MCF 10A (cell line): ENCODE measurements at regions of chr1 and their contacts with region 1.

Region 1: GRCh38 chr1:53182111-53182593 is 14.5 kb upstream of the CPT2 start:
- DNase-seq: peak; percentile 84
- H3K4me3 Mint-ChIP-seq: no peak overlapping the region
- H3K27ac Mint-ChIP-seq: no peak overlapping the region
- H3K4me1 Mint-ChIP-seq: no peaks in the 10 kb centered on the region
- H3K27me3 Mint-ChIP-seq: no peaks in the 10 kb centered on the region
- CTCF ChIP-seq: peak; percentile 66

Region 2: DNA sequence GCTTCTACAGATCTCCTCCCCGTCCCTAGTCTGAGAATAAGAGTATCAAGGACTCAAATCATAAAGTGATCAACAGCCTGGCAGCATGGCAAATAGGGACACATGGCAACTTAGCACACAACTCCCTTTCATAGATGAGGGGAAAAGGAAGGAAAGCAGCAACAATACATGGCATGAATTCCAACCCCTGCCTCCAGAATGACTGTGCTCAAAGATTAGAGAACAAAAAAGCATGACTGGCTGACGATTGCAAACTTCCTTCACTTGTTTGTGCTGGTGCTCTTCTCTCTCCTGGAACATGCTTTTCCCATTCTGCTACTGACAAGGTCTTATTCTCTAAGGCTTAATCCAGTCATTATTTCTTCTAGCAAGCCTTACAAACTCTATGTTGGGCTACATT is 1160.0 kb before region 1 on chr1:
- CTCF ChIA-PET with region 1: no interaction called
- POLR2A ChIA-PET with region 1: no interaction called
- intact Hi-C with region 1: no loop called
- DNase-seq: no peak
- H3K4me3 Mint-ChIP-seq: no peak overlapping the region
- H3K27ac Mint-ChIP-seq: no peak overlapping the region
- H3K4me1 Mint-ChIP-seq: no peaks in the 10 kb centered on the region
- H3K27me3 Mint-ChIP-seq: no peaks in the 10 kb centered on the region
- CTCF ChIP-seq: no peak

Region 3: DNA sequence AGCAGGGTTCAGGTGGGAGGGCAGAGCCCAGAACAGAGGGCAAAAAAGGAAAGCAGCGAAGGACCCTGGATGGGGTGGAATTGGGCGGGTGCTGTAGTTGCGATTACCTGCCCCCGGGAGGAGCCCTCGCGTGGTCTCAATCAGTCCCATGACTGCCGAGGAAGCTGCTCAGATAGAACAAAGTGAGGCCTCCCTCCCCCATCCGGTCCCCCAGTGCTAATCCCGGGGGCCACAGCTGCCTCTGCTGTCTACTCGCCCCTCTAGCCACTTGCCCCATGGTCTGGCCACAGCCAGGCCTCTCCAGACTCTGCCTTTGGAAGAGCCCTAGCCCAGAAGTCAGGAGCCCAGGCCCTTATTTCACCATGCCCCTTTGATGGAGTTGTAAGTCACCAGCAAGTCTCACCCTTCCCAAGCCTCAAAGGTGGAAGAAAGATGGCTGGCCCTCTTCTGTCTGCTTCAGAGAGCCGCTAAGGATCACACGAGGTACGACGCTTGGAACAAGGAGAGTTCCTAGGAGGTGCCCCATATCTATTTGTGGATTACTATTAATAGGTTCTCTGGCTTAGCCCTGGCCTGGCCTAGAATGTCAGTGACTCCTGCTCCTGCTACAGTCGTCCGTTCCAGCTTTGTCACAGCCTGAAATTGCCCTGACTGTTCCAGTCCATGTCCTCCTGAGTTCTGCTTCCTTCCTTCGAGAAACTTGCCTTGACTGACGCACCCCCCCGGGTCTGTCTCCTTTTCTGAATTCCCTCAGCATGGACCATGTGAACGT is 277.0 kb before region 1 on chr1:
- CTCF ChIA-PET with region 1: interaction called, 4 read pairs
- POLR2A ChIA-PET with region 1: no interaction called
- intact Hi-C with region 1: loop called (anchors 1 kb)
- DNase-seq: peak; percentile 27
- H3K4me3 Mint-ChIP-seq: no peak overlapping the region
- H3K27ac Mint-ChIP-seq: no peak overlapping the region
- H3K4me1 Mint-ChIP-seq: no peaks in the 10 kb centered on the region
- H3K27me3 Mint-ChIP-seq: no peaks in the 10 kb centered on the region
- CTCF ChIP-seq: peak; percentile 25

Region 4: DNA sequence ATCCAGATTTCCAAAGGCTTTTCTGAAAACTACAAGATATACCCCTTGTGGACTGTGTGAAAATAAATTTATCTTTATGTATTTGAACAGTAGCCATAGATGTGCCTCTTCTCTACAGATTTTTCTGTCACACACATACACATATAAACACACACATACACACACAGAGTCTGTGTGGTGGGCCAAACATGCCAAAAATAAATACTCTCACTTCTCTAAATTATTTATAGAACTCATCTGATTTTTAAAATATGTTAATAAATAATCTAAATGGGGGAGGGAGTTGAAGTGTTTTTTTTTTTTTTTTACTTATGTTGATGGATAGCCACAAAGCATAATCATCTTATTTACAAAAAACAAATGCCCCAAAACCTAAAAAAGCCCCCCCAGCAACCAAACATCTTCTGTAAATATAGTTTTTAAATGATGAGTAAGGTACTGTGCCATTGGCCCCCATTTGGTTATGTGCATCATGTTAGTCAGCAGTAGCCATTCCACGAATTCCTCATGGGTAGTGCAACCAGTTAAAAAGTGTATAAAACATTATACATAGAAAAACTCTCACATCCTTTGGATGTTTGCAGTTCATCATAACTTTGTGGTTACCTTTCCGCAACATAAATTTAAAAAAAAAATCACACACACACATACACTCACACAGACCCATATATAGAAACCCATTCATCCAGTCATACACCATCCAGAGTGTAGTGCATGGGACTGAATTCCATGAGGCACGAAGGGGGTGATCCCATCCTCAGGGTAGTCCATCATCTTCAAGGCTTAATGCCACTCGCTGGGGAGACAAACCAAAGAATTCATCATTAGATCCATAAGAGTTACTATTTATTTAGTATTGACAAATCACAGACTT is 64.3 kb after region 1 on chr1:
- CTCF ChIA-PET with region 1: no interaction called
- POLR2A ChIA-PET with region 1: no interaction called
- intact Hi-C with region 1: no loop called
- DNase-seq: no peak
- H3K4me3 Mint-ChIP-seq: no peak overlapping the region
- H3K27ac Mint-ChIP-seq: no peak overlapping the region
- H3K4me1 Mint-ChIP-seq: no peaks in the 10 kb centered on the region
- H3K27me3 Mint-ChIP-seq: no peaks in the 10 kb centered on the region
- CTCF ChIP-seq: no peak

Region 5: GRCh38 chr1:54229281-54229891 is 1047.2 kb after region 1 on chr1:
- CTCF ChIA-PET with region 1: no interaction called
- POLR2A ChIA-PET with region 1: no interaction called
- intact Hi-C with region 1: no loop called
- DNase-seq: peak; percentile 47
- H3K4me3 Mint-ChIP-seq: no peak overlapping the region
- H3K27ac Mint-ChIP-seq: no peak overlapping the region
- H3K4me1 Mint-ChIP-seq: peaks cover 16% of the 10 kb centered on the region
- H3K27me3 Mint-ChIP-seq: no peaks in the 10 kb centered on the region
- CTCF ChIP-seq: no peak